PC-3 (cell line): ENCODE measurements at regions of chr1 and their contacts with region 1.

Region 1: DNA sequence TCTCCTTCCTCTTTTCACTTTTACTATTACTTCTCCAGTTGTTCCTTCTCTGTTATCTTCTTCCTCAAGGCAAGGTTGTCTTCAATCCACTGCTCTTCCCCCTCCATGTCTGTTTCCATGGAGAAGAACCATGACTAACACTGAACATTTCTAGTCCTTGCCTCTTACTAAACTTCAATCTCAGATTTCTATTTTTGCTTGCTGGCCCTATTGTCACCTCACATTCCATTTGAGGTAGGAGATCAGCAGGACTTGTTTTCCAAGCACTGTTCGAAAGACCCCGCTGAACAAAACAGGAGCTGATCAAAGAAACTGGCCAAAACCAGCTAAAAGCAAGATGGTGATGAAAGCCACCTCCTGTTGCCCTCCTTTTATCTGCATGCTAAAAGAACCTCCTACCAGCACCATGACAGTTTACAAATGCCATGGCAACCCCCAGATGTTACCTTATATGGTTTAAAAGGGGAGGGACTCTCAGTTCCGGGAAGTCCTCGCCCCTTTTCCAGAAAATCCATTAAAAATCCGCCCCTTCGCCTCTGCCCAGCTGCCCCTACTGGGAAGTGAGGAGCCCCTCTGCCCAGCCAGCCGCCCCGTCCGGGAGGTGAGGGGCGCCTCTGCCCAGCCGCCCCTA is 22.6 kb downstream of the GON4L start:
- DNase-seq: no peak
- ATAC-seq: no peak; the same call in 1 of the 2 replicates
- H3K4me3 ChIP-seq: no peak overlapping the region
- H3K27ac ChIP-seq: no peak overlapping the region
- H3K4me1 ChIP-seq: no peaks in the 10 kb centered on the region
- H3K27me3 ChIP-seq: no peaks in the 10 kb centered on the region
- CTCF ChIP-seq: no peak

Region 2: GRCh38 chr1:155513300-155513916 is 321.0 kb before region 1 on chr1:
- CTCF ChIA-PET with region 1: no interaction called
- POLR2A ChIA-PET with region 1: no interaction called
- intact Hi-C with region 1: no loop called
- DNase-seq: peak; percentile 33
- ATAC-seq: peak; percentile 73
- H3K4me3 ChIP-seq: no peak overlapping the region
- H3K27ac ChIP-seq: no peak overlapping the region
- H3K4me1 ChIP-seq: no peaks in the 10 kb centered on the region
- H3K27me3 ChIP-seq: no peaks in the 10 kb centered on the region
- CTCF ChIP-seq: no peak

Region 3: DNA sequence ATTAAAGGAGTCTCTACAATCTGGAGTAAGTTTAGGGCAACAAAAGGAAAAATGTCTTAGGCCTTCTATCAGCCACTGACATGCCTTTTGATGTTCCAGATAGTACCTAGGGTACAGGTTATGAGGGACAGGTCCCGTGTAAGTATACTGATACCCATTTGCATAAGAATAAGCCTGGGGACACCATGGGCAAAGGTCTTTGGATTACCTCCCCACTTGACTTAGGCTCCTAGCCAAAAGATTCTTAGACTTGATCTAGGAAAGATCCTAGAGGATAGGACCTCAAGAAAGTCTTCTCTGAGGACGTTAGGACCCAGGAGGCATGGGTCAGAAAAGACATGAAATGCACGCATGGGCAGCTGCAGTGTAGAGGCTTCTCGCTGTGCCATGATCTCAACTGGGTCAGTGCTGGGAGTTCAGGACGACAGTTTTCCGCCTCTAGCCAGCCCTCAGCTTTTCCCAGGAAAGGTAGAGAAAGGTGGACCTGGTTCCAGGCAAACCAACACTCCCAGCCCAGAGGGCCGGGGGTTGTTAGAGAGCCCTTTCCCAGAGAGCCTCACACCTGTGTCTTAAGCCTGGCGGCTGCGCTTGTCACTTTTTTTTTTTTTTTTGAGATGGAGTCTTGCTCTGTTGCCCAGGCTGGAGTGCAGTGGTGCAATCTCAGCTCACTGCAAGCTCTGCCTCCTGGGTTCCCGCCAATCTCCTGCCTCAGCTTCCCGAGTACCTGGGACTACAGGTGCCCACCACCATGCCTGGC is 197.8 kb before region 1 on chr1:
- CTCF ChIA-PET with region 1: no interaction called
- POLR2A ChIA-PET with region 1: no interaction called
- intact Hi-C with region 1: no loop called
- DNase-seq: no peak
- ATAC-seq: no peak
- H3K4me3 ChIP-seq: no peak overlapping the region
- H3K27ac ChIP-seq: no peak overlapping the region
- H3K4me1 ChIP-seq: no peaks in the 10 kb centered on the region
- H3K27me3 ChIP-seq: no peaks in the 10 kb centered on the region
- CTCF ChIP-seq: no peak

Region 4: GRCh38 chr1:155859234-155859829 is 24.9 kb after region 1 on chr1 and contains the start of gene SYT11:
- CTCF ChIA-PET with region 1: no interaction called
- POLR2A ChIA-PET with region 1: no interaction called
- intact Hi-C with region 1: no loop called
- DNase-seq: peak; percentile 99
- ATAC-seq: peak; percentile 88
- H3K4me3 ChIP-seq: peak within 1 kb of the TSS; percentile 66
- H3K27ac ChIP-seq: no peak within 1 kb of the TSS
- H3K4me1 ChIP-seq: peaks cover 13% of the 10 kb centered on the region
- H3K27me3 ChIP-seq: peaks cover 27% of the 10 kb centered on the region
- CTCF ChIP-seq: no peak
- total RNA-seq, gene SYT11: 0.29 and 0.44 TPM in 2 replicates

Region 5: DNA sequence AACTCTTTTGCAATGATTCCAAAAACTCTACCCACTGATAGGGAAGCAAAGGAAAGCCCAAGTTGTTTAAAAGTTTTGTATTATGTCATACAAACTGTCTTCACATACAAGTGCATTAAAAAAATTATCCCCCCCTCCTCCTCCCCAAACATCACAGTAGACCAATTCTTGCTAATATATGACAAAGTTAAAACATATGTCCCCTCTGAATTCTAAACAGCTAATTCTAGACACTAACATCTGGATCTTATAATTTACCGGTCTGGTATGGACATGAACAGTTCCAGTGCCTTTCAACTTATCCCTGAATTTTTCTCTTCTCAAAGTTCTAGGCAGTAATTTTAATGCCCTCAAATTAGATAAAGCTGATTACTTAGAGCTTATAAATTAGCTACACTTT is 63.3 kb after region 1 on chr1:
- CTCF ChIA-PET with region 1: no interaction called
- POLR2A ChIA-PET with region 1: no interaction called
- intact Hi-C with region 1: no loop called
- DNase-seq: no peak
- ATAC-seq: no peak
- H3K4me3 ChIP-seq: no peak overlapping the region
- H3K27ac ChIP-seq: no peak overlapping the region
- H3K4me1 ChIP-seq: peaks cover 16% of the 10 kb centered on the region
- H3K27me3 ChIP-seq: no peaks in the 10 kb centered on the region
- CTCF ChIP-seq: no peak

Region 6: DNA sequence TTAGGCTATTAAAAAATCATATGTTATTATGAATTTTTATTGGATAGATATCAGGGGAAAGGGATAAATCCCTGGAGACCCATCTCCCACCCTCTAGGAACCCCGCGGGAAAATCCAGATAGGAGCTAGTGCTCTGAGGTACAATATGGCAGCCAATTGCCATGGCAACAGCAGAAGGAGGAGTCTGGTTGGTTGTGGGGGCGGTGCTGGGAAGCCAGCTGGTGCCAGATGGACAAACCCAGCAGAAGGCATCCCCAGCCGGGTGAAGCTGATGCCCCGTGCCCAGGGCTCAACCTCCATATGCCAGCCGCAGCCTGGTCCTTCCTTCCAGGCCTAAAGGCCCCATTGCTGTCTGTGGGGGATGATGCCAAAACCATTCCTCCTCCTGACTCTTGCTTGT is 572.9 kb after region 1 on chr1:
- CTCF ChIA-PET with region 1: interaction called, 21 read pairs
- POLR2A ChIA-PET with region 1: no interaction called
- intact Hi-C with region 1: no loop called
- DNase-seq: no peak
- ATAC-seq: no peak
- H3K4me3 ChIP-seq: no peak overlapping the region
- H3K27ac ChIP-seq: no peak overlapping the region
- H3K4me1 ChIP-seq: no peaks in the 10 kb centered on the region
- H3K27me3 ChIP-seq: peaks cover 48% of the 10 kb centered on the region
- CTCF ChIP-seq: no peak